ENCODE measurements at regions of chr7 and their contacts with region 1.

Region 1: DNA sequence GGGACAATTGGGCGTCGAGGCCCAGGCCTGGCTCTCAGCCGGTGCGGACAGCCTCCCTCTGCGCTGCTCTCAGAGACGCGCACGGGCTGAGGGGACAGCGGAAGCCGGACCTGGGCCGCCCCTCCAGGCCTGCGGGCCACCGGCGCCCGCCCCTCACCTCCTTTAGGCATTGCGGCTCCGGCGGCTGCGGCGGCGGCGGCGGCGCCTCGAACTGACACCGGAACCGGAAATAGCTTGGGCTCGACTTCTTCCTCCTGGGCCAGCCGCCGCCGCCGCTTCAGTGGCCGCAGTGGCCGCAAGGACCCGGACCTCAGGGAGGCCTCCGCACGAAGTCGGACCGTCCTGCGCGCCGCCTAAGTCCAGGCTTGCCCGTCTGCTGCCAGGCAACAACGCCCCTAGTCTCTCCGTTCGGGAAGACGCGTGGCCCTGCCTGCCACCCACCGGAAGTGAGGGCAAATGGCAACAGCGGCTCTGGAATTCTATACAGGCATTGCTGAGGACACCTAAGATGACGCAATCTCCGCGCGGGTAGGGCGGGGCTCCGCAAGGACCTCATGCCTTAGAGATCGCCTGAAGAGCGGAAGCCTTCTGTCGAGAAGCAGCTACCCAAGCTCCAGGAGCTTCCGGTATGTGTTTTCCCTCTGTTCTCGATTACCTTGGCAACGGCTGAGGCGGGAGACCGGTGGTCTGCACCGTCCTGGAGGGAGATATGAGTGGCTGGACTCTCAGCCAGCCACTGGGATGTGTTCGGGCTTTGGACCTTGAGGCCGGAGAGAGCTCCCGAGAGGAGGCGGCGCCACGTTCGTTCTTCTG is at the starts of genes BUD31 and PDAP1:
- DNase-seq: peak; percentile 96
- ATAC-seq: peak; percentile 97
- total RNA-seq, gene BUD31: 31.5 TPM
- total RNA-seq, gene PDAP1: 97.7 TPM

Region 2: GRCh38 chr7:99123571-99124041 is 285.0 kb before region 1 on chr7:
- intact Hi-C with region 1: no loop called
- DNase-seq: no peak
- ATAC-seq: no peak

Region 3: GRCh38 chr7:99374103-99375064 is 34.2 kb before region 1 on chr7 and contains the start of gene ARPC1B:
- intact Hi-C with region 1: loop called (anchors 5 kb)
- DNase-seq: peak; percentile 92
- ATAC-seq: peak; percentile 80
- total RNA-seq, gene ARPC1B: 40.6 TPM